H1 (cell line): ENCODE measurements at regions of chr6 and their contacts with region 1.

Region 1: DNA sequence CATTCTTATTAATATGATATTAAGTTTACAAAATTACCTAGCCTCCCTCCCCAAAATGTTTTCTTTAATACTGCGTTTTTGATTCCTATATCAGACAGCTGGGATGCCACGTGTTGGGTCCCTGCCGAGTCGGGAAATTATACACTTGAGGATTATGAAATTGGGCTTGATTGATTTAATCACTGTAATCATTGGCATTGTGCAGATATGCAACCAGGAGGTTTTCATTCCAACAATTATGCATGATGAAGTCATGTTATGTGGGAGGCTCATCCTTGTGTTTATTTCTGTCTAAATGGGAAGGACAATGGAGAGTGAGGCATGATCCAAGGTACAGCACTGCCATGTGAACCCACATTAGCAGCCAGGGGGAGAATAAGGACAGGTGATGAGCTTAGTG is 30.6 kb upstream of the RIPOR2 start:
- DNase-seq: no peak
- H3K4me3 ChIP-seq: no peak overlapping the region
- H3K27ac ChIP-seq: no peak overlapping the region
- H3K4me1 ChIP-seq: peaks cover 0 to 7% (median 2%) of the 10 kb centered on the region in 4 experiments; a peak in 2 of 7 replicates
- H3K27me3 ChIP-seq: no peaks in the 10 kb centered on the region
- CTCF ChIP-seq: no peak
- EP300 ChIP-seq: no peak
- POLR2A ChIP-seq: no peak
- RAD21 ChIP-seq: no peak

Region 2: DNA sequence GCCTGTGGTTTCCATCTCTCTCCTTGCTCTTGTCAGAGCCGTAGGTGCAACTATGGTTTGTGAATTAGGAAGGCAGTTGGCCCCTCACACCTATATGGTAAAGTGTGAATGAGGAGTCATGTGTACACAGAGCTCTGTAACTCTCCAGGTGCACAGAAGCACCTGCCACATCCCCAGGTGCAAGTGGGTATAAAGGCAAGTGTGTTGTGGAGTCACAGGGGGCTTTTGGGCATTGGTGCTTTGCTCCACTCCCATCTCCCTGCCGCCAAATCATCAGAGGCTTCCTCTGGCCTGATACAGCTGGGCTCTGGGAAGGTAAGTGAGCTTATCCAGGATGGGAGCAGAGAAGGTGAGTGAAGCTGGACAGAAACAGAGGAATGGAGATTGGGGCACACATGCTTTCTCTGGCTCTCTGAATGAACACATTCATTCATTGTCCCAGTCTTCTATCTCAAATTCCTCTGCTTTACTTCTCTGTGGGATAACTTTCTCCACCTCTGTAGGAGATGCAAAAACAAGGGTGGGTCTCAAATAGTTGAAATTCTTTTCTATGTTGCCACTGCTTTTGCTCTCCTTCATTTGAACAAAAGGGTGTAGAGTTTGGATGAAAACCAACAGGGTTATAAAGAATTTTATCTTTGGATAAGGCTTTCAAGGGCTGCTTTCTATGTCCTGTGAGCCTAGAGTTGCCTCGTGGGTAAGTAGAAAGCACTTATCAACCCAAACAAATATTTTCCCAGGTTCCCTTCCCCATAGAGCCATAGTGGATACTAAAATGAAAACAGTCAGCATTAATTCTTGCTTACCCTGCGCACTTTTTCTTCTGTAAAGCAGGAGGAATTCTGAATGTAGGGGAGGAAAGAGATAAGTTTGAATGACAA is 14.4 kb after region 1 on chr6:
- CTCF ChIA-PET with region 1: interaction called, 3 read pairs
- POLR2A ChIA-PET with region 1: interaction called, 11 read pairs
- DNase-seq: peak in 1 of 2 experiments; percentile 65
- H3K4me3 ChIP-seq: peak overlapping the region in 3 of 4 experiments; percentile 6 to 46 (median 13); a peak in 4 of 8 replicates
- H3K27ac ChIP-seq: peak overlapping the region; percentile 96
- H3K4me1 ChIP-seq: peaks cover 17 to 42% (median 31%) of the 10 kb centered on the region in 4 experiments; a peak in 6 of 7 replicates
- H3K27me3 ChIP-seq: no peaks in the 10 kb centered on the region
- CTCF ChIP-seq: no peak
- EP300 ChIP-seq: peak in 1 of 2 experiments; percentile 76; a peak in 1 of 3 replicates
- POLR2A ChIP-seq: peak; percentile 45 to 86
- RAD21 ChIP-seq: no peak; a peak in 1 of 4 replicates